CD4-positive, alpha-beta T cell (primary cell): ENCODE measurements at regions of chr3 and their contacts with region 1.

Region 1: GRCh38 chr3:189148081-189148507 is 23.7 kb upstream of the TPRG1 start:
- DNase-seq: peak; percentile 53 to 82 (median 63)
- ATAC-seq: peak; percentile 75
- H3K4me3 ChIP-seq: no peak overlapping the region
- H3K4me3 Mint-ChIP-seq: no peak overlapping the region
- H3K27ac ChIP-seq: no peak overlapping the region
- H3K27ac Mint-ChIP-seq: no peak overlapping the region
- H3K4me1 ChIP-seq: peaks cover 8% of the 10 kb centered on the region
- H3K4me1 Mint-ChIP-seq: peaks cover 10% of the 10 kb centered on the region
- H3K27me3 ChIP-seq: no peaks in the 10 kb centered on the region
- H3K27me3 Mint-ChIP-seq: no peaks in the 10 kb centered on the region
- CTCF ChIP-seq: peak; percentile 79

Region 2: DNA sequence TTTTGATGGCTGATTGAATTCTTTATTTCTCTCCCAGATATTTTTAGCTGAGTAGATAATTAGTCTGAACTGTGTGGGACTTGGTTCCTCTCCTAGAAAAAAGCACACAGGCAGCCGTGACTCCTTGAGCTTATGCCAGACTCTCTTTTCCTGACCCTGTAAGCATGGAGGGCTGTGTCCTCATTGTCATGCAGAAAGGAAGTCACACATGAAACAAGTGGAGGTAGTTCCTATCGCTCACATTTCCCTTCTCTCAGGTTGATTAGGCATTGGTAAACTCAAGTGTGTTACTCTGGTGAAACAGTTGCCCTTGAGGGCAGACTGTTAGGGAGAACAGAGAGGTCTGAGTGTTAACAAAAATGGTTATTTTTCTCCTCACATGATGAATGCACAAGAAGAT is 1786.3 kb before region 1 on chr3:
- CTCF ChIA-PET with region 1: no interaction called
- POLR2A ChIA-PET with region 1: no interaction called
- intact Hi-C with region 1: no loop called
- DNase-seq: no peak
- ATAC-seq: no peak
- H3K4me3 ChIP-seq: no peak overlapping the region
- H3K4me3 Mint-ChIP-seq: no peak overlapping the region
- H3K27ac ChIP-seq: no peak overlapping the region
- H3K27ac Mint-ChIP-seq: no peak overlapping the region
- H3K4me1 ChIP-seq: no peaks in the 10 kb centered on the region
- H3K4me1 Mint-ChIP-seq: no peaks in the 10 kb centered on the region
- H3K27me3 ChIP-seq: no peaks in the 10 kb centered on the region
- H3K27me3 Mint-ChIP-seq: no peaks in the 10 kb centered on the region
- CTCF ChIP-seq: no peak

Region 3: DNA sequence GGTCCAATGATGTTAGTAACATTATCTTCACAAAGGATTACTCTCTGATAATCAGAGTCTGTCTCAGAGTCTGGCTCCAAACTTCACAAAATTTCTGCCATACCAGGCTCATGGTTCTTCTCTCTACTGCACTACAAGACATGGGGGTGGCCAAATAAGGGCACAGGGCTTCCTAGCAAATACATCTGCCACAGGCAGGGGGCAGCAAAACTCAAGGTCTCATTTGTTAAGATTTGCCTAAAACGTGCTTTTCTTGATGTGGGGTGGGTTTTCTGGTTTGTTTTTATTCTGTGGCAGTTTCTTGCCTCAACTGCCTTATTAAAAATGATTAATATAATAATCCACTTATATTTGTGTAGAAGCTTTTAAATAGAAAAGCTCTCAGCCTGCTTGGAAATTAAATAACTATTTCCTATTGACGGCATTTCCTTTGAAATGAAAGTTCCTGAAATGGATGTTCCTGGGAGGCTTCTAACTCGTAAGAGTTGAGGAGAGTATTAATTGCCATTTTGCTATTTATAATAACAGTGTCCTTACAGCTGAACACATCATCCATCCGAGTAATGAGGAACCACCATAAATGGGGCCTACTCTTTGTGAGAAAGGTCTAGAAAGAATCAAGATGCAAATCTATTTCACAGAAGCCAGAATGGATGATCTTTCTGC is 1531.7 kb before region 1 on chr3:
- CTCF ChIA-PET with region 1: no interaction called
- POLR2A ChIA-PET with region 1: no interaction called
- intact Hi-C with region 1: loop called in 1 of 2 experiments (anchors 10 kb)
- DNase-seq: peak; percentile 8 to 70 (median 32)
- ATAC-seq: peak; percentile 52
- H3K4me3 ChIP-seq: no peak overlapping the region
- H3K4me3 Mint-ChIP-seq: no peak overlapping the region
- H3K27ac ChIP-seq: no peak overlapping the region
- H3K27ac Mint-ChIP-seq: no peak overlapping the region
- H3K4me1 ChIP-seq: no peaks in the 10 kb centered on the region
- H3K4me1 Mint-ChIP-seq: no peaks in the 10 kb centered on the region
- H3K27me3 ChIP-seq: no peaks in the 10 kb centered on the region
- H3K27me3 Mint-ChIP-seq: peaks cover 5% of the 10 kb centered on the region
- CTCF ChIP-seq: peak; percentile 76

Region 4: GRCh38 chr3:188749010-188749617 is 399.0 kb before region 1 on chr3:
- CTCF ChIA-PET with region 1: interaction called, 5 read pairs
- POLR2A ChIA-PET with region 1: no interaction called
- intact Hi-C with region 1: loop called (anchors 2 to 5 kb)
- DNase-seq: peak; percentile 10 to 79 (median 44)
- ATAC-seq: peak; percentile 80
- H3K4me3 ChIP-seq: no peak overlapping the region
- H3K4me3 Mint-ChIP-seq: no peak overlapping the region
- H3K27ac ChIP-seq: no peak overlapping the region
- H3K27ac Mint-ChIP-seq: no peak overlapping the region
- H3K4me1 ChIP-seq: no peaks in the 10 kb centered on the region
- H3K4me1 Mint-ChIP-seq: peaks cover 5% of the 10 kb centered on the region
- H3K27me3 ChIP-seq: no peaks in the 10 kb centered on the region
- H3K27me3 Mint-ChIP-seq: no peaks in the 10 kb centered on the region
- CTCF ChIP-seq: peak; percentile 71

Region 5: DNA sequence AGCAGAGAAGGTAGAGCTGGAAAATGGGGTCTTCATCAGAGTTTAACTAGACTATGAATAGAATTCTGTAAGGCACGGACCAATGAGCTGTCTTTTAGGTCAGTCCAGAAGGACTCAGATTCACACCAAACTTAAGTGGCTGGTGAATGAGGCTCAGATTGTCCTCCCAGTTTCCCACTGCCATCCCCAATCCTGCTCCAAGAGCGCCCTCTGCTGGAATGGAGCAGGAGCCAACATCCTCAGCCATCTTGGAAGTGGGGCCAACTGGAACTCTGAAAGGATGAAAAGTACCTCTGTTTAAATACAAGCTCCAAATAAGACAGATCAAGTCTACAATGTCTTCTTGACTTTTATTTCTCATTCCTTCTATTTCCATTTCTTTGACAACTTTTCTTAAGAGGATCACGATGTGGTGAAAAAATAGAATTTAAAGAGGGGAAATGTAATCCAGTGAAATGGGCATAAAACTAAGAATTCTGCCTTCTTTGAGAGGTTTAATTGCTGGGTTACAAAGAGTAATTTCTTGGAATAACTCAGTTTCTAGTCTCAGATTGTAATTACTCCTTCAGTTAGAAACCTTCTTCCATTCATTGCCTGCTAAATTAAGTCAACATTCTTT is 193.4 kb before region 1 on chr3:
- CTCF ChIA-PET with region 1: interaction called, 3 read pairs
- POLR2A ChIA-PET with region 1: no interaction called
- intact Hi-C with region 1: loop called (anchors 1 to 2 kb)
- DNase-seq: peak; percentile 51 to 85 (median 64)
- ATAC-seq: peak; percentile 78
- H3K4me3 ChIP-seq: no peak overlapping the region
- H3K4me3 Mint-ChIP-seq: no peak overlapping the region
- H3K27ac ChIP-seq: no peak overlapping the region
- H3K27ac Mint-ChIP-seq: no peak overlapping the region
- H3K4me1 ChIP-seq: peaks cover 2% of the 10 kb centered on the region
- H3K4me1 Mint-ChIP-seq: no peaks in the 10 kb centered on the region
- H3K27me3 ChIP-seq: no peaks in the 10 kb centered on the region
- H3K27me3 Mint-ChIP-seq: peaks cover 9% of the 10 kb centered on the region
- CTCF ChIP-seq: peak; percentile 80

Region 6: DNA sequence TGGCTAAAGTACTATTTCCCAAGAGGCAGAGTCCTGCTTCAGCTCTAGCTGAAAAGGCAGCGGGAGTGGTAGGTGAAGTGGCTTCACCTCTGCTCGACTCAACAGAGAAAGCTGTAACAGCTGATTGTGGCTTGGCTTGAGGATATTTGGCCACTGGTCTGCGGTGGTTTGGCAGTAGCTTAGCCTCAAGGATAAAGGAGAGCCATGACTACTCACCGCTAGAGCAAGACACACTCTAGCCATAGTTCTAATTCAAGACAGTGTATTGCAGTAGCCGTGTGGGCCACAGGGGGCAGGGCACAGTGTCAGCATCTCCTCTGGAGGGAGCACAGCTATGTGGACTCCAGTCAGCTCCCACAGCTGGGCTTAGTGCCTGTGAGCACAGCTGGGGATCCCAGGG is 47.2 kb after region 1 on chr3:
- CTCF ChIA-PET with region 1: no interaction called
- POLR2A ChIA-PET with region 1: no interaction called
- intact Hi-C with region 1: no loop called
- DNase-seq: no peak
- ATAC-seq: no peak
- H3K4me3 ChIP-seq: no peak overlapping the region
- H3K4me3 Mint-ChIP-seq: no peak overlapping the region
- H3K27ac ChIP-seq: no peak overlapping the region
- H3K27ac Mint-ChIP-seq: no peak overlapping the region
- H3K4me1 ChIP-seq: no peaks in the 10 kb centered on the region
- H3K4me1 Mint-ChIP-seq: no peaks in the 10 kb centered on the region
- H3K27me3 ChIP-seq: no peaks in the 10 kb centered on the region
- H3K27me3 Mint-ChIP-seq: no peaks in the 10 kb centered on the region
- CTCF ChIP-seq: no peak